Body of pancreas (tissue), 4 donors: ENCODE measurements at regions of chr14 and their contacts with region 1.

Region 1: DNA sequence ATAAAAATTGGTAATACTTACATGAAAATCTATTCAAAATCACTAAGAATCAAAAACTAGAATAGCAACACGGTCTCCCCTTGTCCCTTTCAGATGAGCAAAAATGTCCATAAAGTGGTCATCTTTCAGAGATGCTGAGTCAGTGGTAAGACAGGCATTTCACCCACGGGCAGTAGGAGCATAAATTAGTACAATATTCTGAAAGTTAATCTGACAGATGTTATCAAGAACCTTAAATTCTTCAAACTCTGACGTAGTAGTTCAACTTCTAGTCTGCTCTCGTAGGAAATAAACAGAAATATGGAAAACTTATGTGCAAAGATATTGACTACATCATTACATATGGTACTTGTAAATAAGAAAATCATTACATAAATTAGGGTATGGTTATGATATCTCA is 33.1 kb upstream of the GNPNAT1 start:
- DNase-seq: no peak
- ATAC-seq: no peak
- H3K4me3 ChIP-seq: no peak overlapping the region
- H3K27ac ChIP-seq: no peak overlapping the region
- H3K4me1 ChIP-seq: no peaks in the 10 kb centered on the region
- H3K27me3 ChIP-seq: no peaks in the 10 kb centered on the region
- CTCF ChIP-seq: no peak
- POLR2A ChIP-seq: no peak

Region 2: GRCh38 chr14:52961060-52961639 is 136.6 kb after region 1 on chr14:
- intact Hi-C with region 1: loop called (anchors 5 kb)
- DNase-seq: peak; percentile 63 to 72 (median 67)
- ATAC-seq: peak; percentile 89
- H3K4me3 ChIP-seq: no peak overlapping the region
- H3K27ac ChIP-seq: no peak overlapping the region
- H3K4me1 ChIP-seq: peaks cover 7% of the 10 kb centered on the region
- H3K27me3 ChIP-seq: no peaks in the 10 kb centered on the region
- CTCF ChIP-seq: peak; percentile 36 to 79 (median 74)
- POLR2A ChIP-seq: no peak

Region 3: GRCh38 chr14:53055003-53055402 is 230.5 kb after region 1 on chr14:
- intact Hi-C with region 1: loop called (anchors 10 kb)
- DNase-seq: no peak
- ATAC-seq: peak; percentile 67
- H3K4me3 ChIP-seq: no peak overlapping the region
- H3K27ac ChIP-seq: no peak overlapping the region
- H3K4me1 ChIP-seq: no peaks in the 10 kb centered on the region
- H3K27me3 ChIP-seq: no peaks in the 10 kb centered on the region
- CTCF ChIP-seq: peak; percentile 56 to 83 (median 72)
- POLR2A ChIP-seq: no peak

Region 4: DNA sequence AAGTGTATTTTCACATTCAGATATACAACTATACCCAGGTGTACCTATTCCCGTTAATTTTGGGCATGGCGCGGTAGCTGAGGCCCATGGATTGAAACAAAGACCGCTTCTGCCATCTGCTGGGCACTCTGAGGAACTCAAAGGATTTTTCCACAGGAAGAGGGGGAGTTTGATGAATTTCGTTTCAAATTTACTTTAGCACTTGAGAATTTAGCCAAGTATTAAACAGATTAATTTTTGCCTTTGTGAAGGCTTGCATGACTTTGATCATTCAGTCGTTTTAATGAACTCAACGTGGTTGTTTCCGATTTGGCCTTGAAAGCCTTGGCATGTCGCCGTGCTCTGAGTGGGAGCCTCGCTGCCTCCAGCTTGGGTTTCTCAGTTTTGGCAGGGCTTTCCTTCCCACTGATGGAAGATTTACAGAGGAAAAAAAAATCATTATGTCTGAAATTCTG is 481.8 kb after region 1 on chr14:
- intact Hi-C with region 1: loop called (anchors 10 kb)
- DNase-seq: peak; percentile 49 to 63 (median 58)
- ATAC-seq: peak; percentile 84
- H3K4me3 ChIP-seq: no peak overlapping the region
- H3K27ac ChIP-seq: peak overlapping the region in 1 of 4 donors; percentile 25
- H3K4me1 ChIP-seq: no peaks in the 10 kb centered on the region
- H3K27me3 ChIP-seq: no peaks in the 10 kb centered on the region
- CTCF ChIP-seq: peak; percentile 66 to 84 (median 76)
- POLR2A ChIP-seq: no peak